ENCODE measurements at regions of chr7 and their contacts with region 1.

Region 1: DNA sequence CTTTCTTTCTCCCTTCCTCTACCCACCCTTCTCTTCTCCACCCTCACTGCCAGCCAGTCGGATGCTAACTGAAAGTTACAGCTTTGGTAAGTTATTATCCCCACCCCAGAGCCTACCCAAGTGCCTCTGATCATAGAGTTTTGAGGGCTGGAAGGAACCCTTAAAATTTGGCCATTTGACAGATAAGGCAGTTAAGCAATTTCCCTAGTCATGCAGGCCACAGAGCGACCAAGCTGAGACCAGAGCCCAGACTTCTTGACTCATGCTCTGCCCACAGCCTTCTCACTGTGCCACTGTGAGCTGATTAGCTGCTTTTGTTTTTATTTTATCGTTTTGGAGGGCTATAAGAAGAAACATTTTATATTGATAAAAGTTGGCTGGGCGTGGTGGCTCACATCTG is 17.2 kb downstream of the SAP25 start:
- DNase-seq: no peak
- CTCF ChIP-seq: no peak

Region 2: GRCh38 chr7:100088621-100089457 is 467.7 kb before region 1 on chr7 and contains the start of gene COPS6:
- CTCF ChIA-PET with region 1: no interaction called
- POLR2A ChIA-PET with region 1: no interaction called
- DNase-seq: peak; percentile 89
- CTCF ChIP-seq: no peak

Region 3: DNA sequence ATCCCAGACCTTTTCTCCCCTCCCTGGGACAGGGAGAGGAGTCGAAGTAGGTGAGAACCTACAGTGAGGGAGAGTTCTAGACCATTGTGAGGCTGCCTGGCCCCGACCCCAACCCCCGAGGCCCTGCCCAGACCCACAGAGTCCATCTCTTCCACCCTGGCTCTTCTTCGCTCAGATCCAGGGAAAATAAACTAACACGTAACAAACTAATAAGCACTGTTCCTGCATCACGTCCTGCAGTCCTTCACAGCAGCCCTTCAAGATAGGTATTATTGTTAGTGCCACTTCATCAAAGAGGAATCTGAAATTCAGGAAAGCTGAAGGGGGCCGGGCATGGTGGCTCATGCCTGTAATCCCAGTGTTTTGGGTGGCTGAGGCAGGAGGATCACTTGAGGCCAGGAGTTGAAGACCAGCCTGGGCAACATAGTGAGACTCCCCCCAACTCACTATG is 92.3 kb before region 1 on chr7 and contains the start of gene SPACDR:
- CTCF ChIA-PET with region 1: interaction called, 41 read pairs
- POLR2A ChIA-PET with region 1: interaction called, 4 read pairs
- DNase-seq: no peak
- CTCF ChIP-seq: no peak

Region 4: DNA sequence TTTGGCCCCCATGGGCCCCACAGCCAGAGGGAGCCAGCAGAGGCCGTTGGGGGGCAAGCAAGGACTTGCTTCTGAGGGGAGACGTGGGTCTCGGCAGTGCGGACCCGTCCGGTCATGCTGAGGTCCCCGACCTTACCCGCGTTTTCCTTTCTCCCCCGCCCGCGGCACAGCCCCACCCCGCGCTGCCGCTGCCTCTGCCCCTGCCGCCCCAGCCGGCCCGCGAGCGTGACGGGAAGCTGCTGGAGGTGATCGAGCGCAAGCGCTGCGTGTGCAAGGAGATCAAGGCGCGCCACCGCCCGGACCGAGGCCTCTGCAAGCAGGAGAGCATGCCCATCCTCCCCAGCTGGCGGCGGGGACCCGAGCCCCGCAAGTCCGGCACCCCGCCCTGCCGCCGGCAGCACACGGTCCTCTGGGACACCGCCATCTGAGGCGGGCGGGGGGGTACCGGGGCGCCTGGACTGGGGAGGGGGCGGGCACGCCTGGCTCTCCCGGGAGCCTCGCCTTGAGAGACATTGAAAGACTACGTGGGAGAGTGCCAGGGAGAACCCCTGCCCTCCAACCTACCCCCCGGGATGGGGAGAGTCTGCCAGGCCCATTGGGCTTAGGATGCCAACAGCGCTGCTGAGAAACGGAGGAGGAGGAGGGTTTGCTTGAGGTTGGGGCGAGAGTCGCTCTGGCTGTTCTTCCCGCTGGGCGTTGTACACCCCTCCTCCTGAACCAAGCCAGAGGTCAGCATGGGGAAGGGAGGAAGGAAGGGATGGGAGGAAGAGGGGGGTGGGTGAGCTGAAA is 62.9 kb before region 1 on chr7:
- CTCF ChIA-PET with region 1: interaction called, 15 read pairs
- POLR2A ChIA-PET with region 1: no interaction called
- DNase-seq: peak; percentile 65
- CTCF ChIP-seq: peak; percentile 51

Region 5: DNA sequence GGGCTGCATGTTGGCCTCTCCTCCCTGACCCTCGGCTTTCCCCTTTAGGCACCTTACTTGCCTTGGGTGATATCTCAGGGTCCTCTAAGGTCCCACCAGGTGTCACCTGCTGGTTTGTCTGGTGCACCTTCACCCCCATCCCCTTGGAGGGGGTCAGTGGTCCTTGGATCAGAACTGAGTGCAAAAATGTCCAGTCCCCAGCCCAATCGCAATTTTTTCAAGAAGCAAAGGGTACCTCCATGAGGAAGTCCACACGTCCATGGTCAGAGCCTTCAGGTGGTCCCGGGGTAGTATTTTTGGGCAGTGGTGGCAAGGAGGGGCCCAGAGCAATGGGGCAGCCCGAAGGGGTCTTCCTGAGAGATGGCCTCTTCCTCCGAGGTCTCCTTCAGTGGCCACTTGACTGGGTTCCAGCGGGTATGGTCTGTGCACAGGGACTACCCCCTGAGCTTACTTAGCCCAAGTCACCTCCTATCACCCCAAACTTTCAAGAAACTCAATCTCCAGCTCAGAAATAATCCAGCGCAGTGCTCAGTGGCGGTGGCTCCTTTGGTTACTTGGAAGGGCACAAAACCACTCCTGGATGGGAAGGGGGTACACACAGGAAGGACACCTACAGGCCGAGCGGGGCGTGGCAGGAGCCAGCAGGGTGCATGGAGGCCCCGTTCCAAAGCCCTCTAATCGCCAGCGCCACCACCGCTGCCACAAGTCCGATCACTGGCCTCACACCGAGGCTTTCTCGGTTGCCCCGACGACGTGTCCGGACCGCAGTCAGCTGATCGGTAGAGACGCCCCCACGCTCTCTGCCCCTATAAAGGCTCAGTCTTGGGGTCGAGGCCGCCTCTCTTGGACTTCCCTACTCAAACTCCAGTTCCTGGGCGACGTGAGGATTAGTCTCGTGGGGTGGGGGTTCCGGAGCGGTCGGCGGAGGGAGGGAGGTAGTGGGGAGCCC is 12.6 kb after region 1 on chr7:
- CTCF ChIA-PET with region 1: interaction called, 288 read pairs
- POLR2A ChIA-PET with region 1: no interaction called
- DNase-seq: peak; percentile 60
- CTCF ChIP-seq: peak; percentile 31

Region 6: GRCh38 chr7:100691676-100692577 is 135.4 kb after region 1 on chr7:
- CTCF ChIA-PET with region 1: interaction called, 12 read pairs
- POLR2A ChIA-PET with region 1: no interaction called
- DNase-seq: peak; percentile 87
- CTCF ChIP-seq: peak; percentile 97

Measured in GM10248 (cell line).